A549 (cell line): ENCODE measurements at regions of chr10 and their contacts with region 1.

Region 1: GRCh38 chr10:132458593-132459300 is 61.7 kb downstream of the PWWP2B start:
- DNase-seq: peak in 1 of 2 experiments; percentile 61
- ATAC-seq: peak; percentile 63 to 88
- H3K4me3 ChIP-seq: no peak overlapping the region; the same call in 2 of the 3 replicates
- H3K27ac ChIP-seq: no peak overlapping the region
- H3K4me1 ChIP-seq: peaks cover 22% of the 10 kb centered on the region
- CTCF ChIP-seq: peak; percentile 90
- EP300 ChIP-seq: no peak
- POLR2A ChIP-seq: no peak
- RAD21 ChIP-seq: peak; percentile 93 to 98

Region 2: GRCh38 chr10:132294561-132295318 is 164.0 kb before region 1 on chr10:
- CTCF ChIA-PET with region 1: no interaction called
- POLR2A ChIA-PET with region 1: no interaction called
- DNase-seq: no peak
- ATAC-seq: no peak
- H3K4me3 ChIP-seq: no peak overlapping the region
- H3K27ac ChIP-seq: no peak overlapping the region
- H3K4me1 ChIP-seq: no peaks in the 10 kb centered on the region
- CTCF ChIP-seq: no peak
- EP300 ChIP-seq: no peak
- POLR2A ChIP-seq: no peak
- RAD21 ChIP-seq: no peak

Region 3: DNA sequence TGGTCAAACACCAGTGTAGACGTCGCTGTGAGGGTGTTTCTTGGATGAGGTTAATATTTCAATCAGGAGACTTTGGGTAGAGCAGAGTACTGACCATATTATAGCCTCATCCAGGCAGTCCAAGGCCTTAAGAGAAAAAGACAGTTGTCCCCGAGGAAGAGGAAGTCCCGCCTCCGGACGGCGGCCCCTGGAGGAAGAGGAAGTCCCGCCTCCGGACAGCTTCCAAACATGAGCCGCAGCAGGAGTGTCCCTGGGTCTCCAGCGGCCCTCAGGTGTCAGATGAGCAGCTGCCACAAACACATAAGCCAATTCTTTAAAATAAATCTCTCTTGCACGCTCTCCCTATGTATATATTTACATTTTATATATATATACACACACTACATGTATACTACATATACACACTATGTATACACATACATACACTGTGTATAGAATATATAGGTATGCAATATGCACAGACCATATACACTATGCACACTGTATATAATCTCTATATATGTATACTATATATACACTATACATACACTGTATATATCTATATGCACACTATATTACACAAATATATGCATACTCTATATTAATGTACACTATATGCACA is 24.2 kb before region 1 on chr10:
- CTCF ChIA-PET with region 1: no interaction called
- POLR2A ChIA-PET with region 1: no interaction called
- DNase-seq: peak in 1 of 2 experiments; percentile 59
- ATAC-seq: peak; percentile 55 to 80; a peak in 3 of 6 replicates
- H3K4me3 ChIP-seq: no peak overlapping the region
- H3K27ac ChIP-seq: peak overlapping the region; percentile 68 to 81
- H3K4me1 ChIP-seq: peaks cover 6% of the 10 kb centered on the region
- CTCF ChIP-seq: no peak
- EP300 ChIP-seq: no peak
- POLR2A ChIP-seq: no peak
- RAD21 ChIP-seq: no peak

Region 4: DNA sequence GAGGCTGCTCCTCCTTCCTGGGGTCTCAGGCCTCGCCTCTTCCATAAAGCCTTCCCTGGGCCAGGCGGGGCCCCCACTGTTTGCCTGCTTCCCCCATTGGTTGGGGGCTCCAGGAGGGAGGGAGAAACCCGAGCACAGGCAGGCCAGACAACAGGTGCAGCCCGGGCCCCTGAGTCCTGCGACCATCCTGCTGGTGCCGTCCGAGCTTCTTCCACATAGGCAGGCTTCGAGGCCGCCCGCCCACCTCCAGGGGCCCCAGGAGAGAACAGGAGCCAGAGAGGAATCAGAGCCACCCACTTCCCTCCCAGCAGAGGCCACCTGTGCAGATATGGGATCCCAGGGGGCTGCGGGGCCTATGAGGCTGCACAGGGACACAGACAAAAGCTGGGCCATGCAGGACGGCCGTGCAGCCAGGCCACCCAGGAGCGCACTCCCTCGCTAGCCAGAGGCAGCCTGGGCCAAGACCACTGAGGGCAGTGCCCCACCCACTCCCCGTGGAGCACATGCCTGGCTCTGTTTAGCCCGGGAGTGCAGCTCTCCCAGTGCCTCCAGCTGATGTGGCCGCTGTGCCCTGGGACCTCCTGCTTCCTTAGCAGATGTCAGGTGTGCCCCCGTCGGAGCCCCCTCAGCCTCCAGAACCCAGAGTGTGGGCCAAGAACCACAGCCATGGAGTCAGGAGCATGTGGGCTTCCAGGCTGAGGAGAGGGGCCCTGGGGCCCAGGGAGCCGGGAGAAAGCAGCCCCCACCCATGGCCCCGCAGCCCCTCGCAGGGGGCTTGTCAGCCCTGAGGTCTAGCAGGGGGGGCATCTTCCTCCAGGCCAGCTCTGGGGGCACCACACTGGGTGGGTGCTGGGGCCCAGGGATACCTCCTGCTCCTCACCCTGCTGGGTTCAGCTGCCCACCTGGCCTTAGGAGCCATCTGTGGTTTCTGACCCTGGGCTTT is 18.9 kb after region 1 on chr10:
- CTCF ChIA-PET with region 1: interaction called, 27 read pairs
- POLR2A ChIA-PET with region 1: no interaction called
- DNase-seq: no peak
- ATAC-seq: peak in 1 of 2 experiments; percentile 37; a peak in 2 of 6 replicates
- H3K4me3 ChIP-seq: no peak overlapping the region
- H3K27ac ChIP-seq: no peak overlapping the region
- H3K4me1 ChIP-seq: no peaks in the 10 kb centered on the region
- CTCF ChIP-seq: no peak
- EP300 ChIP-seq: no peak
- POLR2A ChIP-seq: no peak
- RAD21 ChIP-seq: no peak

Region 5: DNA sequence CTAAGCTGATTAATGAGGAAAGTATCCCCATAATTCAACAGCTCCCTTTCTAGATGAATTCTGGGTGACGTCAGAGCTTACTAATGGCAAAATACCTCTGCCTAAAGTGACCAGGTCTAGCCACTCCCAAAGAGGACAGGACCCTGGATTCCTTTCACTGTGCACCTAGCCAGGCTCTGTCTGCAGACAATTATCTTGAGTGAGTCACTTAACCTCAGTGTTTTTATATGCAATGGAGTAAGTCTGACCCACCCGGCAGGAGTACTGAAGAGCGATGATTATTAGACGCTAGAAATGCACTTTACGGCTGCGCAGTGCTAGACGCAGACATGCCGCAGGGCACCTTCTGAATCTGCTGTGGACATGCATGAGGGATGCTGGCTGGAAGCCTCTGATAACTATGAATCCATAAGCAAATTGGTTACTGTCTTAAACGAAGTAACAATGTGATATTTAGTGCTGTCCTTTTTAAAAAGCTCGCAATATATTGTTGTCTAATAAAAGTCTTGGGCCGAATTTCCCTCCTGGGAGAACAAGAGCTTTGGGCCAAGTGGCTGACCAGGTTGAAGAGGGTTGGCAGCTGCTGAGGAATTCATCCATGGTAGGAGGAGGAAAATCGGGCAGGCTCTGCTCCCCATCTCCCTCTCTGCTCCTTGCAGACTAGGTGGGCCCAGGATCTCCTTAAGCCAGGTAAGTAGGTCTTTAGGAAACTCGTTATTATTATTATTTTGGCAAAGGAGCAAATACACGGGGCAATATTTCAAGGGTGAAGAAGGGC is 74.2 kb after region 1 on chr10:
- CTCF ChIA-PET with region 1: interaction called, 20 read pairs
- POLR2A ChIA-PET with region 1: no interaction called
- DNase-seq: peak in 1 of 2 experiments; percentile 32
- ATAC-seq: no peak
- H3K4me3 ChIP-seq: no peak overlapping the region
- H3K27ac ChIP-seq: no peak overlapping the region
- H3K4me1 ChIP-seq: peaks cover 18% of the 10 kb centered on the region
- CTCF ChIP-seq: no peak
- EP300 ChIP-seq: no peak
- POLR2A ChIP-seq: no peak
- RAD21 ChIP-seq: no peak

Region 6: DNA sequence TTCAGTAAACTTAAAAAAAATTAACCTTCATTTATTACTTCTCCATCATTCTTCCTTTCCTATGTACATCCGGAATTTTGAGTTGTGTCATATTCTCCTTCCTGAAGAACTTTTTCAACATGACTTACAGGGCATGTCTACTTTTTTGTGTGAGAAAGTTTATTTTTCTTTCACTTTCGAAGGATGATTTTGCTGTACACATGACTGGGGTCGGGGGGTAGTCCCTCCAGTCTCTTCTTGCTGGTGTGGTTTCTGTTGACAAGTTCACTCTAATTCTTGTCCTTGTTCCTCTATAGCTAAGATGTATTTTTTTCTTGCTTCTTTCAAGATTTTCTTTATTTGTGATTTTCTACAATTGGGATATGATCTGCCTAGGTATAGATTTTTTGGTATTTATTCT is 134.6 kb after region 1 on chr10:
- CTCF ChIA-PET with region 1: interaction called, 10 read pairs
- POLR2A ChIA-PET with region 1: no interaction called
- DNase-seq: no peak
- ATAC-seq: no peak
- H3K4me3 ChIP-seq: no peak overlapping the region
- H3K27ac ChIP-seq: no peak overlapping the region
- H3K4me1 ChIP-seq: peaks cover 27% of the 10 kb centered on the region
- CTCF ChIP-seq: no peak
- EP300 ChIP-seq: no peak
- POLR2A ChIP-seq: no peak
- RAD21 ChIP-seq: no peak

Region 7: DNA sequence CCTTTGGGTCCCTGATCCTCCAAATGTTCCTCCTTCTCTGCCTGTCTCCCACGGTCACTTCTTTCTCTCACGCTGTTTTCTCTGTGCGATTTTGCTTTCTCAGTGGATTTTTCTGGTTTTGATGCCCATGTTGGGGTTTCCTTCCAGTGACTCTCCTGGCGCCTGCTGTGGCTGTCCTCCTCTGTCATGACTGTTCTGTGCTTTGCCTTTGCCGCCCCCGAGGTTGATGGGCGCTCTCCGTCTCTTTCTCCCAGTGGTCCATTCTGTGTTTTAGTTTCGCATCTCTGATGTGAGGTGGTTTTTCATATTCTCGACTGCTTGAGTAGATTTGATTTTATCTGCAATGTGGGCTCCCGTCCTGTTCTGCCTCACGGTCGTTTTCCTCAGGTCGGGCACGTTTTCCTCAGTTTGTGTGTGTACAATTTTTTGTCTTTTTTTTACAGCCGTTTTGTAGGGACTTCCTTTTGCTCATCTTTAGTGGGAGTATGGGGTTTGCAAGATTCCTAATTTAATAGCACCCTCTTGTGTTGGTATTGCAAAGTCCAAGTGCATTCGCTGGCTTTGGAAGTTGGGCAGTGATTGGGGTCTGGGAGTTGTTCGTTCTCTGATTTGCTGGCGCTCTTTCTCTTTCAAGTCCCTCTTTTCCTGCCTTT is 178.9 kb after region 1 on chr10:
- CTCF ChIA-PET with region 1: interaction called, 134 read pairs
- POLR2A ChIA-PET with region 1: no interaction called
- DNase-seq: peak; percentile 66 to 93
- ATAC-seq: peak; percentile 83 to 94
- H3K4me3 ChIP-seq: no peak overlapping the region
- H3K27ac ChIP-seq: no peak overlapping the region
- H3K4me1 ChIP-seq: peaks cover 3% of the 10 kb centered on the region; the same call in 1 of the 3 replicates
- CTCF ChIP-seq: peak; percentile 86
- EP300 ChIP-seq: no peak
- POLR2A ChIP-seq: no peak
- RAD21 ChIP-seq: peak; percentile 95 to 96

Region 8: DNA sequence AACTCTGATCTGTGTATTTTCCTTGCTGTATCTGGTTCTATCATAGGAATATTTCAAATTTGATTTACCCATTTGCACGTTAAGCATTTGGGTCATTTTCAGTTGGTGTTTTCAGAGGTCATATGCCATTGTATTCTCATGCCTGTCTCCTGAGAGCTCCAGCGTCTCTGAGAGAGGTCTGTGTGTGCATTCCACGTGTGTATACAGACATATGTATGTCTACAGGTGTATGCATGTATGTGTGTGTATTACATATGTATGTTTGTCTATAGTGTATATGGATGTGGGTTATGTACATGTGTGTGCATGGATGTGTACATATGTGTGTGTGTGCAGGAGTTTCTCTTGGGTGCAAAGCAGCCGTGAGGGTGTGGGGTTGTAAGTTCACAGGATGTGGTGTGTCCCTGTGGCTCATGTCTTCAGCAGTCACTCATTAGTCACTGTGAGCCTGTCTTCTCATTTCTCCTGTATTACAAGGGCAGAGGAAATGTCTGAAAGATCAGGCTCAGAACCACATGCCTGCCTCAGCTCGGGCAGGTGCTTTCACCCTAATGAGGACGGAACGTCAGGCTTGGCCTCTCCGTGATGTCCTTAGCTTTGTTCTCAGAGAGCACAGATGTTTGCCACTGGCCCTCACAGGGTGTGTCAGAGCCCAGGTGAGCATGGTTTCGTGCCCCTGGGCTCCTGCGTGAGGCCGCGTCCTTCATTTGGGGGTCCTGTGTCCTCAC is 225.6 kb after region 1 on chr10:
- CTCF ChIA-PET with region 1: no interaction called
- POLR2A ChIA-PET with region 1: no interaction called
- DNase-seq: no peak
- ATAC-seq: peak in 1 of 2 experiments; percentile 28; a peak in 1 of 6 replicates
- H3K4me3 ChIP-seq: no peak overlapping the region
- H3K27ac ChIP-seq: peak overlapping the region in 1 of 2 experiments; percentile 8; a peak in 1 of 6 replicates
- H3K4me1 ChIP-seq: peaks cover 13% of the 10 kb centered on the region
- CTCF ChIP-seq: no peak
- EP300 ChIP-seq: no peak
- POLR2A ChIP-seq: no peak
- RAD21 ChIP-seq: no peak